ENCODE measurements at regions of chr3 and their contacts with region 1.

Region 1: GRCh38 chr3:73100741-73101559 is 39.5 kb downstream of the EBLN2 start:
- DNase-seq: peak; percentile 70
- H3K4me3 ChIP-seq: no peak overlapping the region
- H3K27ac ChIP-seq: no peak overlapping the region
- H3K4me1 ChIP-seq: peaks cover 18% of the 10 kb centered on the region
- H3K27me3 ChIP-seq: no peaks in the 10 kb centered on the region
- CTCF ChIP-seq: peak; percentile 95

Region 2: DNA sequence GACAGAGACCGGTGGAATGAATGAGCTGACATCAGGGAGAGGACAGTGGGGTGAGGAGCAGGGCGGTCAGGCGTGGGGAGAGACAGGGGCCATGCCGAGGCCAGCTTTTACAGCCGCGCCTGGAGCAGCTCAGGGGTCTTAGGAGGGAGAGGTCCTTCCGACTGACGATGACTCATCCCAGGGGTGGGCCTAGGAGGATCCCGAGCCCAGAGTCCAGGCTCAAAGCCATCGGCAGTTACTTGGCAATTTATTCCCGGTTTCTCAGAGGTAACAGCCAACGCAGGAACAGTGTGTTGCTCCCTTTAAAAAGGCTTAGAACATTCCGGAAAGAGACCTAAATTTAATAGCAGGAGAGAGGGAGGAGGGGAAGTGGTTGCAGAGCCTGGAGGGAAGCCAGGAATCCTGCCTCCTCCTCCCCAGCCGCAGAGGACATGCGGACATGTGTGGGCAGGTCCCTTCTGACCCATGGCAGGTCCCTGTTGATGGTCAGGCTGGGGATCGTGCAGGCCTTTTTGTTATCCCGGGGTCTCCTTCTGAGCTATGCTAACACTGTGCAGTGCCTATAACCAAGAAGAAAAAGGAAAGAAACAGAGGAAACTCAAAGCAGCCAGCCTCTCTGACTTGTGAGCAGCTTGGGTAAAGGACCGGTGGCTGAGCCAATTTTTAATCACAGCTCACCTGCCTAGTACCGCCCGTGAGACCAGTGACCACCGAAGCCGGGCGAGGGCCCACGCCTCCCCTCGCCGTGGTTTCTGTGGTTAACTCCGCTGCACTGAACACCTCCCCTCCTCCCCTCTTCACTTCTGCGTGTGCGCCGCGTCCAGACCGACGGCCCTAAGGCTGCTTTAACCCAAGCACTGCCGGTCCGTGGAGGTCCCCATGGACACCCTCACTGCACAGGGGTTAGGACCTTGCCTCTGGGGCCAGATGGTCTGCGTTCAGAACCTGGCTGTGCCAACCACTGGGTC is 923.6 kb before region 1 on chr3:
- intact Hi-C with region 1: no loop called
- DNase-seq: peak; percentile 46
- H3K4me3 ChIP-seq: peak overlapping the region; percentile 42
- H3K27ac ChIP-seq: peak overlapping the region; percentile 37
- H3K4me1 ChIP-seq: peaks cover 38% of the 10 kb centered on the region
- H3K27me3 ChIP-seq: peaks cover 12% of the 10 kb centered on the region
- CTCF ChIP-seq: no peak

Region 3: GRCh38 chr3:73037369-73037699 is 63.6 kb before region 1 on chr3:
- intact Hi-C with region 1: no loop called
- DNase-seq: no peak
- H3K4me3 ChIP-seq: no peak overlapping the region
- H3K27ac ChIP-seq: peak overlapping the region; percentile 43
- H3K4me1 ChIP-seq: peaks cover 100% of the 10 kb centered on the region
- H3K27me3 ChIP-seq: no peaks in the 10 kb centered on the region
- CTCF ChIP-seq: no peak

Region 4: GRCh38 chr3:73432023-73432705 is 331.2 kb after region 1 on chr3:
- intact Hi-C with region 1: loop called (anchors 5 kb)
- DNase-seq: no peak
- H3K4me3 ChIP-seq: peak overlapping the region; percentile 5
- H3K27ac ChIP-seq: no peak overlapping the region
- H3K4me1 ChIP-seq: peaks cover 71% of the 10 kb centered on the region
- H3K27me3 ChIP-seq: no peaks in the 10 kb centered on the region
- CTCF ChIP-seq: peak; percentile 69

Region 5: DNA sequence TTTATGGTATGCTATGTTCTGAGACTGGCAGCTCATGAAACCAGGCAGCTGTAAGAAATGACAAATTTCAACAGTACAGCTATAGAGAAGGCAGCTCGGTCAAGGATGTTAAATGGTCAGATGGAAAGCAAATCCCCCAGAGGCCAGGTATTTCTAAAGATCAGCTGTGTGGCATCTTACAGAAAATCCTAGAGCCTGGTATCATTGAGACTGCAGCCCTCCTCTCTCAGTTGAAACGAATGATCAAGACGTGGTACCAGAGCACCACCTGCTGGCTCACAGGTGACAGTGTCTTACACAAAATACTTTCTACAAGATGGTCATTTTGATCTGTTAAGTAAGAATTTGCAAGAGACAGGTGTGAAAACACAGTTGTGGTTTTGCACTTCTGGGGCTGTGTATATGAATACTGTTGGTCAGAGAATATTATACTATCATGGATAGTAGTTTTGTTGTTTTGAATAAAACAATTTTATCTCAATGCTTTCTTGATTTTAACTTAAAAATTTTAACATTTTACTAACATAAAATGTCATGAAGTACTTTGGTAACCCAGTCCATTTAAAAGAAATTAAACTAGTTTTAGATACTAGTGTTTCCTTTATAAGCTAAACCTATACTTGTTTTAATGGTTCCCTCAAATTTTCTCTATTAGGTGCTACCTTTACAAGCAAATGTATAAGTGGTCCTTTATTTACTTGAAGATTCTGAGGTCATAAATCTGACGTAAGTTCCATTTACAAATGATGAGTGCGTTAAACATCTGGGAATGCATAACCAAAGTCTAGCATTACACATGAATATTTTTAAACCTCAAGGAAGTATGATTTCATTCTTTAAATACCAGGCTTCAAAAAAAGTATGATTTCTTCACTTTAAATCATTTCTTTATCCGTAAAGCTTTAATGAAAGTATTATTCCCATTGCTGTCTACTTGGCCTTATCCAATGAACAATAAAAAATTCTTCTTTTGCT is 401.9 kb after region 1 on chr3:
- intact Hi-C with region 1: loop called (anchors 5 kb)
- DNase-seq: peak; percentile 61
- H3K4me3 ChIP-seq: no peak overlapping the region
- H3K27ac ChIP-seq: peak overlapping the region; percentile 62
- H3K4me1 ChIP-seq: peaks cover 89% of the 10 kb centered on the region
- H3K27me3 ChIP-seq: no peaks in the 10 kb centered on the region
- CTCF ChIP-seq: peak; percentile 86

Measured in left ventricle myocardium inferior (tissue), 1 donor.